WTC11 (cell line): ENCODE measurements at regions of chr9 and their contacts with region 1.

Region 1: GRCh38 chr9:114653556-114654159 is 3.9 kb downstream of the TEX53 start:
- DNase-seq: peak; percentile 81
- ATAC-seq: peak; percentile 96
- H3K4me3 Mint-ChIP-seq: no peak overlapping the region
- H3K27ac Mint-ChIP-seq: no peak overlapping the region
- H3K4me1 Mint-ChIP-seq: peaks cover 4% of the 10 kb centered on the region; the same call in 1 of the 2 replicates
- H3K27me3 Mint-ChIP-seq: no peaks in the 10 kb centered on the region; the same call in 1 of the 2 replicates
- CTCF ChIP-seq: peak; percentile 74

Region 2: DNA sequence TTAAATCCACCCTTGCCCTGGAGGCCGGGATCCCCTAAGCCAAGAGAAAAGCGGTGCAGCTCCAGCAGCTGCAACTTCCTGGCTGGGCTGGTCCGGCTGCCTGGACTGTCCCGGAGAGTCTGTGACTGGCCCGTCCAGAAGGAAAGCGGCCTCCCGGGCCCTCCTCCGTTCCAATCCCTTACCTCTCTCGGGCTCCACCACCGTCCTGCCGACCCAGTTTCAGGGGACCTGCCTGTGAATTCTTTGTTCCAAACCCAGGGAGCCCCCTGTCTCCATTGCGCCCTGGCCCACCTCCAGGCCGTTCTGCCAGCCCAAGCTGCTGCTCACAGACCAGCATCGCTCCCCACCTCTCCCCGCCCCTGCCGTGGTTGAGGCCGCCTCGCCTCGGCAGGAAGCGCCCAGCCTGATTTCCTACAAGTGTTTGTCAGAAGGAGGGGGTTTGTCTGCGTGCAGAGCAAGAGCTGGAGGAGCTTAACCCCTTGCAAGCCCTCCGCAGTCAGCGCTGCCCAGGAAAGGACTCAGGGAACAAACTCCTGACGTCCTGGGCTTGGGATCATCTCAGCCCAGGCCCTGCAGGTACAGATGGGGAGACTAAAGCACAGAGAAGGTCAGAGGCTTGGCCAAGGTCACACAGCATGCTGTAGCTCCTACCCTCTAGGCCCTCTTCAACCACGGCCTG is 265.8 kb before region 1 on chr9 and contains the start of gene AKNA:
- CTCF ChIA-PET with region 1: interaction called, 11 read pairs
- POLR2A ChIA-PET with region 1: no interaction called
- DNase-seq: peak; percentile 74
- ATAC-seq: peak; percentile 60
- H3K4me3 Mint-ChIP-seq: peak within 1 kb of the TSS; percentile 53
- H3K27ac Mint-ChIP-seq: peak within 1 kb of the TSS; percentile 59
- H3K4me1 Mint-ChIP-seq: peaks cover 76% of the 10 kb centered on the region
- H3K27me3 Mint-ChIP-seq: no peaks in the 10 kb centered on the region
- CTCF ChIP-seq: no peak
- total RNA-seq, gene AKNA: 26.0 to 29.3 TPM (median 27.5 TPM) in 3 replicates

Region 3: DNA sequence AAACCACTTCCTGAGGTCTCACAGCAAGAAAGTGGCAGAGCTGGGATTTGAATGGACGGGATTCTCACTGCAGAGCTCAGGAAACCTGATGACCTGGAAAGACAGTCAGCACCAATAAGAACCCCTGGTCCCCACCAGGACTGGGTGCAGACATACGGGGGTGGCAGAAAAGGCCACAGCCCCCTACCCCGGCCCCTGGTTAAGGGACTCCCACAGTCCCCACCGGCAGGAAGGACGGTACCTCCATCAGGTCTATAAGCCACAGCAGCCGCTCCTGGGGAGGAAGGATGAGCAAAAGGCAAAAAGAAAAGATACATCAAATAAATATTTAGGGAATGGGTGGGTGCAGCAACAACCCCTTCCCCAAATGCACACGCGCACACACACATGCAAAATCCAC is 233.9 kb before region 1 on chr9:
- CTCF ChIA-PET with region 1: interaction called, 21 read pairs
- POLR2A ChIA-PET with region 1: no interaction called
- DNase-seq: no peak
- ATAC-seq: no peak
- H3K4me3 Mint-ChIP-seq: no peak overlapping the region
- H3K27ac Mint-ChIP-seq: no peak overlapping the region
- H3K4me1 Mint-ChIP-seq: peaks cover 10% of the 10 kb centered on the region
- H3K27me3 Mint-ChIP-seq: no peaks in the 10 kb centered on the region
- CTCF ChIP-seq: no peak

Region 4: GRCh38 chr9:114487607-114488300 is 165.9 kb before region 1 on chr9:
- CTCF ChIA-PET with region 1: interaction called, 48 read pairs
- POLR2A ChIA-PET with region 1: no interaction called
- DNase-seq: peak; percentile 69
- ATAC-seq: peak; percentile 97
- H3K4me3 Mint-ChIP-seq: no peak overlapping the region
- H3K27ac Mint-ChIP-seq: peak overlapping the region; percentile 2; the same call in 1 of the 2 replicates
- H3K4me1 Mint-ChIP-seq: peaks cover 7% of the 10 kb centered on the region
- H3K27me3 Mint-ChIP-seq: no peaks in the 10 kb centered on the region
- CTCF ChIP-seq: peak; percentile 86

Region 5: GRCh38 chr9:114549697-114550330 is 103.8 kb before region 1 on chr9:
- CTCF ChIA-PET with region 1: interaction called, 14 read pairs
- POLR2A ChIA-PET with region 1: no interaction called
- DNase-seq: no peak
- ATAC-seq: no peak
- H3K4me3 Mint-ChIP-seq: no peak overlapping the region
- H3K27ac Mint-ChIP-seq: no peak overlapping the region
- H3K4me1 Mint-ChIP-seq: peaks cover 12% of the 10 kb centered on the region
- H3K27me3 Mint-ChIP-seq: peaks cover 3% of the 10 kb centered on the region; the same call in 1 of the 2 replicates
- CTCF ChIP-seq: no peak

Region 6: DNA sequence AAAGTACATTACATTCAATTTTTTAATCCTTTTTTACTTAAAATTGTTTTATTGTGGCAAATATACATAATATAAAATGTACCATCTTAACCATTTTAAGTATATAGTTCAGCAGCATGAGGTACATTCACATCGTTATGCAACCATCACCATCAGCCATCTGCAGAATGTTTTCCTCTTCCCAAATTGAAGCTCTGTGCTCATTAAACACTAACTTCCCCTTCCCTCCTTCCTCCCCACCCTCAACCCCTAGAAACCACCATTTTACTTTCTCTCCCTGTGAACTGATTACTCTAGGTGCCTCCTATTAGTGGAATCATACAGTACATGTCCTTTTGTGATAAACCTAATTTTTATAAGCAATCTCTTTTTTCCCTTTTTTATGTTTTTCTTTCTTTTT is 11.7 kb before region 1 on chr9:
- CTCF ChIA-PET with region 1: interaction called, 17 read pairs
- POLR2A ChIA-PET with region 1: interaction called, 3 read pairs
- DNase-seq: no peak
- ATAC-seq: no peak
- H3K4me3 Mint-ChIP-seq: no peak overlapping the region
- H3K27ac Mint-ChIP-seq: no peak overlapping the region
- H3K4me1 Mint-ChIP-seq: no peaks in the 10 kb centered on the region
- H3K27me3 Mint-ChIP-seq: no peaks in the 10 kb centered on the region
- CTCF ChIP-seq: no peak

Region 7: GRCh38 chr9:114733816-114734215 is 80.2 kb after region 1 on chr9:
- CTCF ChIA-PET with region 1: no interaction called
- POLR2A ChIA-PET with region 1: no interaction called
- DNase-seq: no peak
- ATAC-seq: no peak
- H3K4me3 Mint-ChIP-seq: no peak overlapping the region
- H3K27ac Mint-ChIP-seq: no peak overlapping the region
- H3K4me1 Mint-ChIP-seq: no peaks in the 10 kb centered on the region
- H3K27me3 Mint-ChIP-seq: peaks cover 16% of the 10 kb centered on the region
- CTCF ChIP-seq: no peak